ENCODE measurements at regions of chr3 and their contacts with region 1.

Region 1: DNA sequence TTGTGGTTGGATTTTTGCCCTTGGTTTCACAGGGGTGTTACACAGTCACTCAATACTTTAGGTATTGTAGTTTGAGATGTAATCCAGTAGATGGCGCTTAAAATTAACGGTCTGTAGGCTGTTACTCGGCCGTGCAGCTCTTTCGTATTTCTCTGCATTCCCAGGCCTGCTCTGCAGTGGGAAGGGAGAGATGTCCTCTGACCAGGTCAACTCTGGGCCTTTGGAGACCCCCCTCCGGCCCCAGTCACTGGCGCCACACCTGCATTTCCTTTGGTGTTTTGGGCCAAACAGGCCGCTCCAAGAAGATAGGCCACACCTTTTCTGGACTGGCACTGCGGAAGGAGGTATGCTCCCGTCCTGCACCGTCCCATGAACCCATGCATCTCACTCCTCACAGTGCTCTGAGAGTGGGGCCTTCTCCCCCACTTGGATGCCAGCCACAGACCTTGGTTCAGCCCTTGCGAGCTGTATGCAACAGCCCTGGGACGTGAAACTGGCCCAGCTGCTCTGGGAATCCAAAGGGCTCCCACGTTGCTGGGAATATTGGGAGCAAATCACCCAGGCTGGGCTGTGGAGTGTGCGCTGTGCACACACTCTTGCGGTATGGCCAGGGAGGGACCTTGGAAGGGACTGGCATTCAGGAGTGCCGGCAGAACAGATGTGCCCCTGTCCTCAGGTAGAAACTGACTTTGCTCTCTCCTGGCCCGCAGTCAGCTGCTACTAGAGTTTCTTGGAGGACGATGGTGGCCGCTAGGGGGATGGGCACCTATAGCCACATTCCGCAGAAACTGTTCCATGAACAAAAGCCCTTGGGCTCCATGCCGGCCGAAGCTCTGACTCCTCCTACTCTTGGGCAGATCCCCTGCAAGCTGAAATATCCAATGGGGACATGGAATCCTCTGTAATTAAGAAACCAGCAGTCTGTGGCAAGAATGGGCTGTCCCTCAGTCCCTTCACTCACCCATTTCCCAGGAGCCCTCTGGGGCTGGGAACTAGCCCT is 410.5 kb upstream of the CADM2 start:
- DNase-seq: peak in 1 of 4 donors; percentile 18
- ATAC-seq: peak; percentile 97
- H3K4me3 ChIP-seq: no peak overlapping the region
- H3K27ac ChIP-seq: no peak overlapping the region
- H3K4me1 ChIP-seq: no peaks in the 10 kb centered on the region
- H3K27me3 ChIP-seq: no peaks in the 10 kb centered on the region
- CTCF ChIP-seq: peak in 1 of 2 donors; percentile 45

Region 2: GRCh38 chr3:84683493-84683892 is 135.2 kb after region 1 on chr3:
- intact Hi-C with region 1: no loop called
- DNase-seq: no peak
- ATAC-seq: no peak
- H3K4me3 ChIP-seq: no peak overlapping the region
- H3K27ac ChIP-seq: no peak overlapping the region
- H3K4me1 ChIP-seq: no peaks in the 10 kb centered on the region
- H3K27me3 ChIP-seq: no peaks in the 10 kb centered on the region
- CTCF ChIP-seq: no peak

Region 3: GRCh38 chr3:84724877-84725276 is 176.6 kb after region 1 on chr3:
- intact Hi-C with region 1: no loop called
- DNase-seq: no peak
- ATAC-seq: no peak
- H3K4me3 ChIP-seq: no peak overlapping the region
- H3K27ac ChIP-seq: no peak overlapping the region
- H3K4me1 ChIP-seq: no peaks in the 10 kb centered on the region
- H3K27me3 ChIP-seq: no peaks in the 10 kb centered on the region
- CTCF ChIP-seq: no peak

Region 4: GRCh38 chr3:84755860-84756259 is 207.6 kb after region 1 on chr3:
- intact Hi-C with region 1: no loop called
- DNase-seq: no peak
- ATAC-seq: no peak
- H3K4me3 ChIP-seq: no peak overlapping the region
- H3K27ac ChIP-seq: no peak overlapping the region
- H3K4me1 ChIP-seq: no peaks in the 10 kb centered on the region
- H3K27me3 ChIP-seq: no peaks in the 10 kb centered on the region
- CTCF ChIP-seq: no peak

Region 5: DNA sequence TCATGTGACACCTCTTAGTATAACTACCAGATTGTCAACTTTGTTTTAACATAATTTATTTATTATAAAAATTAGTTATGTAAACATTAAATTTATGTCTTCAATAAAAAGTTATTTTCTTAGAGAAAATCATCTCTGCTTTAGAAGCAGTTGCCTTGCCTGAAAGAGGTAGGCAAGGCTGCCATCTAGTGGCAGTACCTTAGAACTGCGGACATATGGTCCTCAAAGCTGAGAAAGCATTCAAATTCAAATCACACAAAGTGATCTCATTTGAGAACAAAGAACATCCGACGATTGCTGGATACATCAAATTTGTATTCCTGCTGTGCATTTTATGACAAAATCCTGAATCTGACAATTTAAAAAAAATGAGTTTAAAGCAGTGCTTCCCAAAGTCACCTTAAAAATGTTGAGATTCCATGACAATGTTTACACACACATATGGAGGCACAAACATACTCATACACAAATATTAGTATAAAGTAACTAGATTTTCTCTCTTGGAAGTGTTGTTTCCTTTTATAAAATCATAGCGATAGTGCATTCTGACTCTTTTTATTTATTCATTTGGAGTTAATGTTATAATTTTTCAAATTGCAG is 1027.9 kb after region 1 on chr3:
- intact Hi-C with region 1: loop called in 1 of 2 experiments (anchors 10 kb)
- DNase-seq: peak in 2 of 4 donors; percentile 35 to 76
- ATAC-seq: peak; percentile 84
- H3K4me3 ChIP-seq: no peak overlapping the region
- H3K27ac ChIP-seq: no peak overlapping the region
- H3K4me1 ChIP-seq: no peaks in the 10 kb centered on the region
- H3K27me3 ChIP-seq: no peaks in the 10 kb centered on the region
- CTCF ChIP-seq: peak; percentile 73 to 86

Measured in left lung (tissue), 14 donors.